Mammary epithelial cell (primary cell): ENCODE measurements at regions of chr3 and their contacts with region 1.

Region 1: GRCh38 chr3:14261229-14261628 is 82.6 kb downstream of the LSM3 start:
- DNase-seq: peak; percentile 46
- H3K4me3 ChIP-seq: no peak overlapping the region
- H3K27ac ChIP-seq: no peak overlapping the region
- H3K4me1 ChIP-seq: peaks cover 7% of the 10 kb centered on the region
- H3K27me3 ChIP-seq: no peaks in the 10 kb centered on the region
- CTCF ChIP-seq: peak; percentile 98

Region 2: DNA sequence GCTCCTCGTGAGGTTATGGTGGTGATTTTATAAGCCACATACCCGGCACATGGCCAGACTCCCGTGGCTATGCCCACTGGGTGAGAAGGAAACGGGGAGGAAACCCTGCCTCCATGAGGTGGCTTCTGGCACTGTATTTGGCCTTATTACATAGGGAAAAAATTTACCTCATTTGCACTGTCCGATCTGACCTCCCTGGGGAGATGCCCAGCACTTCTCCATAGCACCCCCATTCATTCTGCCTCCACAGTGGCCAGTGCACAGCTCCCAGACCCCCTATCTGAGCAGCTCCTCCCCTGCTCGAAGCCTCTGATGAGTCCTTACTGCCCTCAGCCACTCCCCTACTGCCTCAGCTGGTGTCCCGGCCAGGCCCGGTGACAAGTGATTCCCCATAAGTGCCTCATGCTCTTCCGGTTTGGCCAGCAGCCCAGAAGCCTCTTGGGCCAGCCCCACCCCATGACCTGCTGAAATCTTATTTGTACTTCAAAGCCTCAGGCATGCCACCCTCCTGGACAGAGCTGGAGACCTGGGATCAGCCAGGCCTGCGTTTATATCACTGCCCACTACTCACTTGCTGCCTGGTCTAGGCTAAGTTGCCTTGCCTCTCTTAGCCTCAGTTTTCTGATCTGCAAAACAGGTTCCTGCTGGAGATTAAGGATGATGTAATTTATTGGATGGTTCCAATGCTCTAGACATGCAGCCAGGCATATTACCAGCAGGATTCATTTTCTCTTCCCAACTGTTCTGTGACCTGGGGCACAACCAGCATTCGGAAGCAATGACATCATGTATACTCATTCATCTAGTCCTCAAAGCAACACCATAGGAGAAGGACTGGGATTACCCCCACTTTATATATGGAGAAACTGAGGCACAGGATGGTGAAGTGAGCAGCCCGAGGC is 110.6 kb after region 1 on chr3:
- CTCF ChIA-PET with region 1: no interaction called
- dilution Hi-C with region 1: no loop called
- in situ Hi-C with region 1: no loop called
- intact Hi-C with region 1: loop called (anchors 10 kb)
- DNase-seq: peak; percentile 52
- H3K4me3 ChIP-seq: no peak overlapping the region
- H3K27ac ChIP-seq: no peak overlapping the region
- H3K4me1 ChIP-seq: peaks cover 48% of the 10 kb centered on the region
- H3K27me3 ChIP-seq: no peaks in the 10 kb centered on the region
- CTCF ChIP-seq: peak in 1 of 2 donors; percentile 26

Region 3: DNA sequence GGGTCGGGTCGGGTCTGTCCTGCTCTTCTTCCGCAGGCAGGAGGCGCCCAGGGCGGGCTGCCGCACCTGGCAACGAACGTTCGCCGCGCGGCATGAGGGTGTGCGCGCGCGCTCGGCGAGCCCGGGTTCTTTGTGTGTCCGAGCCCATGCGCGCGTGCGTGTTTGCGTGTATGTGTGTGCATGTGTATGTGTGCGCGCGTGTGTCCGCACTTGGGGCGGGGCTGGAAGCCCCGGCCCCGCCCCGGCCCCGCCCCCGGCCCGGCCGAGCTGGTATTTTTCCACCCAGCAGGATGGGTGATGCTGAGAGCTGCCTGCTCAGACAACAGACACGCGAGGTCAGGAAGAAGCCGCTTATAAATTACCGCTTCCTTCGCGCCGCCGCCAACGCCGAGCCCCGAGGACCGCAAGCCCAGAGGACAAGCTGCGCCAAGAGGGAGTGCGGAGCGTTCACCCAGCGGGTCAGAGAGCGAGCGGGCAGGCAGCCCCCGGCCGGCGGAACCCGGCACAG is 141.1 kb after region 1 on chr3 and contains the start of gene SLC6A6:
- CTCF ChIA-PET with region 1: no interaction called
- dilution Hi-C with region 1: no loop called
- in situ Hi-C with region 1: no loop called
- intact Hi-C with region 1: loop called (anchors 1 kb)
- DNase-seq: peak; percentile 96
- H3K4me3 ChIP-seq: peak within 1 kb of the TSS; percentile 51 to 83 (median 63)
- H3K27ac ChIP-seq: peak within 1 kb of the TSS; percentile 67
- H3K4me1 ChIP-seq: peaks cover 19% of the 10 kb centered on the region
- H3K27me3 ChIP-seq: no peaks in the 10 kb centered on the region
- CTCF ChIP-seq: peak; percentile 25 to 66
- total RNA-seq, gene SLC6A6: 14.8 to 17.7 TPM

Region 4: DNA sequence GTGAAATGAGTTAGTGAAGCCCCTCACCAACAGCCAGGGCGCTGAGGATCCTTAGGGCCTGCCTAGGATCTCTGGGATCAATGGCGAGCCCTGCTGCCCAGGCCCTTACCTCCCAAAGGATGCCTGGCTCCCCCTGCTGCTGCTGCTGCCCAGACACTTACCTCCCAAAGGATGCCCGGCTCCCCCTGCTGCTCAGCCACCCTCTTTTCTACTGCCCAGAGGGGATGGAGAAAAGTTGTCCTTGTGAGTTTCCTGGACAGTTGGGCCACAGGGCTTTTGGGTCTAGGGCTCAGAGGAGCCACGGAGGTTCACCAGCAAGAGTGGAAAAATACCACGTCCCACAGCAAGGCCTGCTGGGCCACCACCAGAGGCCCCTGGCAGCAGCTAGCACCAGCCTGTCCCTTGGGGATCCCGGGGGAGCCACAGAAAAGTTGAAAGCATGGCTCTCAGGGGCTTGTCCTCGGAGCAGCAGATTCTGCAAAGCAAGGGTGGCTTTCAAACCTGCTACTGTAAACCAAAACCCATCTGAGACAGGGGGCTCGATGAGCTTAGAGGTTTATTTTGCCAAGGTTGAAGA is 200.6 kb after region 1 on chr3:
- CTCF ChIA-PET with region 1: interaction called, 3 read pairs
- dilution Hi-C with region 1: no loop called
- in situ Hi-C with region 1: loop called (anchors 5 kb)
- intact Hi-C with region 1: loop called (anchors 1 kb)
- DNase-seq: peak; percentile 44
- H3K4me3 ChIP-seq: no peak overlapping the region
- H3K27ac ChIP-seq: no peak overlapping the region
- H3K4me1 ChIP-seq: peaks cover 4% of the 10 kb centered on the region
- H3K27me3 ChIP-seq: no peaks in the 10 kb centered on the region
- CTCF ChIP-seq: peak; percentile 68 to 96

Region 5: GRCh38 chr3:14467814-14468620 is 206.8 kb after region 1 on chr3:
- CTCF ChIA-PET with region 1: interaction called, 26 read pairs
- dilution Hi-C with region 1: no loop called
- in situ Hi-C with region 1: loop called (anchors 5 kb)
- intact Hi-C with region 1: loop called (anchors 1 kb)
- DNase-seq: no peak
- H3K4me3 ChIP-seq: no peak overlapping the region
- H3K27ac ChIP-seq: no peak overlapping the region
- H3K4me1 ChIP-seq: peaks cover 9% of the 10 kb centered on the region
- H3K27me3 ChIP-seq: no peaks in the 10 kb centered on the region
- CTCF ChIP-seq: peak; percentile 63 to 78

Region 6: GRCh38 chr3:14548321-14548729 is 287.1 kb after region 1 on chr3:
- CTCF ChIA-PET with region 1: no interaction called
- dilution Hi-C with region 1: no loop called
- in situ Hi-C with region 1: no loop called
- intact Hi-C with region 1: loop called (anchors 2 kb)
- DNase-seq: peak; percentile 20
- H3K4me3 ChIP-seq: no peak overlapping the region
- H3K27ac ChIP-seq: no peak overlapping the region
- H3K4me1 ChIP-seq: peaks cover 9% of the 10 kb centered on the region
- H3K27me3 ChIP-seq: peaks cover under 1% of the 10 kb centered on the region
- CTCF ChIP-seq: peak; percentile 58 to 73